ENCODE measurements at regions of chr1 and their contacts with region 1.

Region 1: GRCh38 chr1:233025157-233025915 is 74.9 kb downstream of the NTPCR start:
- DNase-seq: peak; percentile 50 to 60
- H3K4me3 ChIP-seq: no peak overlapping the region
- H3K27ac ChIP-seq: no peak overlapping the region
- H3K4me1 ChIP-seq: no peaks in the 10 kb centered on the region; a peak in 1 of 7 replicates
- H3K27me3 ChIP-seq: no peaks in the 10 kb centered on the region
- CTCF ChIP-seq: peak; percentile 73 to 85 (median 74)
- EP300 ChIP-seq: no peak
- POLR2A ChIP-seq: no peak
- RAD21 ChIP-seq: peak; percentile 81 to 83

Region 2: DNA sequence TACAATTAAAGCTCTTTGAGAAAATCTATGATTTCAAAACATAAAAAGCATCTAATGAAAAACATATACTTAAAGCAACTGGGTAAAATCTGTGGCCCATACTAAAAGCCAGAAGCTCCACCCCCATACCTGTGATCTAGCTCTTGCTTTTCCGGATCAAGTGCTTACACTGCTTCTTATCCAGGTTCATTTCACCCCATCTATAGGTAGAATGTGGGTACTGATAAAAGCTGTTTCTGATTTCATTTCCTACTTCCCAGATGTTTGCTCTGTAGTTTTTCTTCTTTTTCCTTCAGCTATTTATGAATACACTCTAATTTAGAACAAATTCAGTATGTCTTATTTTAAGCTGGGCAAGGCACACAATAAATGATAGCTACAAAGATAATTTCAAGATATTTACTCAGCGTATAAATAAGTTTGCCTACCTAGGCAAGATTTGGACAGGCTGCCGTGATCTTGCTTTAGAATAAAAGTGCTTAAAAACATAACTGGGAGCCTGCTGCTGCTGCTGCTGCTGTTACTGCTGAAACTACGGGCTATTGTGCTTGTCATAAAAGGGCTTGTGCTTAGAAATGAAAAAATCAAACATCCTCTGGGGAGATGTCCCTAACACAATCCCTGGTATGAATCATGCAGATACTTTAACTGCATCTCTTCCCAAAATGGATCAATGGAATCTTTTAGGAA is 397.5 kb before region 1 on chr1:
- CTCF ChIA-PET with region 1: interaction called, 16 read pairs
- POLR2A ChIA-PET with region 1: no interaction called
- DNase-seq: no peak
- H3K4me3 ChIP-seq: no peak overlapping the region
- H3K27ac ChIP-seq: no peak overlapping the region
- H3K4me1 ChIP-seq: peaks cover 0 to 7% (median 5%) of the 10 kb centered on the region in 4 experiments
- H3K27me3 ChIP-seq: peaks cover 5 to 29% (median 14%) of the 10 kb centered on the region in 4 experiments; a peak in 6 of 7 replicates
- CTCF ChIP-seq: peak in 2 of 3 experiments; percentile 37 to 62; a peak in 2 of 4 replicates
- EP300 ChIP-seq: no peak
- POLR2A ChIP-seq: no peak
- RAD21 ChIP-seq: peak; percentile 75 to 82

Region 3: DNA sequence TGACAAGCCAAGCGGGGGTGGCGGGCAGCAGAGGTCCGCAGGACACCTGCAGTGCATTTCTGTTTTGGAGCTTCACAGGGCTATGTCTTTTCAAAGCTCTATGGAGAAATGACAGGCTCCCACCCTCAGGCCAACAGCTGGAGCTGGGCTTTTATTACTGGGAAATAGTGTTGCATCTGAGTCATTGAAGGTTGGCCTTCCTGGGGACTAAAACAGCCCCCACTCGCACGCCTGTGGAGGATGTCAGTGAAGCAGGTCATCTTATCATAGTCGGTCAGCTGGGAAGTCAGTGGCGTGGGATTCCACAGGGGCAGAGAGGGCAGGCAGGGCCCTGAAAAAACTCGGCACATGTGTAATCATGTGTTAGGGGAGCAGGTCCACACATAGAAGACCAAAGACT is 19.6 kb before region 1 on chr1:
- CTCF ChIA-PET with region 1: interaction called, 19 read pairs
- POLR2A ChIA-PET with region 1: no interaction called
- DNase-seq: no peak
- H3K4me3 ChIP-seq: no peak overlapping the region
- H3K27ac ChIP-seq: no peak overlapping the region
- H3K4me1 ChIP-seq: no peaks in the 10 kb centered on the region
- H3K27me3 ChIP-seq: no peaks in the 10 kb centered on the region
- CTCF ChIP-seq: no peak
- EP300 ChIP-seq: no peak
- POLR2A ChIP-seq: no peak
- RAD21 ChIP-seq: no peak

Region 4: GRCh38 chr1:233012021-233012420 is 13.3 kb before region 1 on chr1:
- CTCF ChIA-PET with region 1: interaction called, 19 read pairs
- POLR2A ChIA-PET with region 1: no interaction called
- DNase-seq: no peak
- H3K4me3 ChIP-seq: no peak overlapping the region
- H3K27ac ChIP-seq: no peak overlapping the region
- H3K4me1 ChIP-seq: no peaks in the 10 kb centered on the region
- H3K27me3 ChIP-seq: no peaks in the 10 kb centered on the region
- CTCF ChIP-seq: no peak
- EP300 ChIP-seq: no peak
- POLR2A ChIP-seq: no peak
- RAD21 ChIP-seq: no peak

Region 5: DNA sequence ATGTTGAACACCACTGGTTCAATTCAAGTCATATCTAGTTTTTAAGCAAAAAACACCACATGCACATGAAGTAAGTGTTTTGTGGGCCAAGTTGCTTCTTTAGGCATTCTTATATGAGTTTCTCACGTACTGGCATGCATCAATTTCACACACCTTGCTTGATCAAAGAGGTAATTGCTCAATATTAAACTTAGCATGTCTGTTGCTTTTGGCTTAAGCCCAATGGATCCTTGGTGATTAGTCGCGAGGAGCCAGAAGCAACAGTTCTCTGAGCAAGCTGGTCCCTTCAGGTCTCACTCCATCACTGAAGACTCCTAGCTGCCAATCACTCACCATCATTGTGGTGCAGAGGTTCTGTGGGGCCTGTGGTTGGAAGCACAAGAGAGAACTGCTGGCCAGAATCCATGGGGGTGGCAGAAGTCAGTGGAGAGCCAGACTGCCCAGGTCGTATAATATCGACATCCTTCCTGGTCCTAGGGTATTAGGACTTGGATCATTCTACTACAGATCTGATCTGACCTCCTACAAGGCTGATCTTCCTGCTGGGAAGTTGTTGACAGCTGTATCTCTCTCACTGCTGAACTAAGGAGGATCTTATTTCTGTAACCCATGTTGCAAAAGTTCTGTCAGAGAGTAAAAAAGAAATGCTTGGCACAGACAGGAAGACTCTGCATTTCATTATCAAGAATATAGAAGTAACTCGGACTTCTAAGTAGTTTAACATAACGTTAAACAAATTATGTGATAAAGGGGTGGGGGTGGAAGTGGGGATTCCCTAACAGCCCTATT is 65.6 kb after region 1 on chr1:
- CTCF ChIA-PET with region 1: no interaction called
- POLR2A ChIA-PET with region 1: no interaction called
- DNase-seq: no peak
- H3K4me3 ChIP-seq: no peak overlapping the region
- H3K27ac ChIP-seq: no peak overlapping the region
- H3K4me1 ChIP-seq: peaks cover 0 to 4% (median 0%) of the 10 kb centered on the region in 4 experiments; a peak in 2 of 7 replicates
- H3K27me3 ChIP-seq: no peaks in the 10 kb centered on the region
- CTCF ChIP-seq: no peak
- EP300 ChIP-seq: no peak
- POLR2A ChIP-seq: no peak
- RAD21 ChIP-seq: no peak